Activated CD4-positive, alpha-beta T cell treated with anti-CD3 and anti-CD28 coated beads for 36 hours (primary cell): ENCODE measurements at regions of chr5 and their contacts with region 1.

Region 1: GRCh38 chr5:131252824-131253171 is 11.1 kb upstream of the CDC42SE2 start:
- DNase-seq: peak; percentile 87
- ATAC-seq: peak; percentile 70
- H3K4me3 Mint-ChIP-seq: peak overlapping the region; percentile 84
- H3K27ac Mint-ChIP-seq: peak overlapping the region; percentile 98
- H3K4me1 Mint-ChIP-seq: peaks cover 69% of the 10 kb centered on the region
- H3K27me3 Mint-ChIP-seq: no peaks in the 10 kb centered on the region

Region 2: DNA sequence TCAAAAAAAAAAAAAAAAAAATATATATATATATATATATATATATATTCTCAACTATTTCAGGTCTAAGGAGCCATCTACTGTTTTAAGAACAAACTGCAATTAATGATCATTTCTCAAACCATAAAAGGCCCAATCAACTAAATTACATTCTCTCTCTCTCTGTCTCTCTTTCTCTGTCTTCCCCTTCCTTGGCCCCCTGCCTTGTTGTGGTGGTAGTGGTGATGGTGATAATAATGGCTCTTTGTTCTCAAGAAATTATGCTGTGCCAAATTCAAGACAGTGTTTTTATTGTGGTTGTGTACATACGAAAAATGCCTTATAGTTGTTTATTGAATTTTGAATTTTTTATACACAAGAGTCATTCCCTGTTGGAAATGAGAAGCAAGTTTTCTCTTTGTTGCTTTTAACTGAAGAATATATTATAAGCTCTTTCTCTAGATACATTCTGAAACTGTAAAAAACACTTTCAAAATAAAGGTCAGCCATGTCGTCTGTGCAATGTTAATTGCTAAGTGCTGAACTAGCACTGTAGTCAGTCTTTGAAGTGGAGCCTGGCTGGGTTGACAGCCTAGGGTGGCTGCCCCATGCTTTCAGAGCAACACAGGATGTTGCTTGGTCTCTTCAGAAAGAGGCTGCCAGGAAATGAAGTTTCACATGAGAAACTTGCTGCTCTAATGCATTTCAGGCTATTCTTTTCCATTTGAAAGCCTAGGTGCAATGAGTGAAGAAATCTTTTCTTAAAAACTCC is 183.7 kb before region 1 on chr5:
- CTCF ChIA-PET with region 1: no interaction called
- POLR2A ChIA-PET with region 1: no interaction called
- intact Hi-C with region 1: loop called in 1 of 2 experiments (anchors 5 kb)
- DNase-seq: peak; percentile 81
- ATAC-seq: peak; percentile 99
- H3K4me3 Mint-ChIP-seq: peak overlapping the region; percentile 16
- H3K27ac Mint-ChIP-seq: peak overlapping the region; percentile 95
- H3K4me1 Mint-ChIP-seq: peaks cover 50% of the 10 kb centered on the region
- H3K27me3 Mint-ChIP-seq: no peaks in the 10 kb centered on the region

Region 3: GRCh38 chr5:131170540-131171275 is 82.1 kb before region 1 on chr5 and contains the start of gene LYRM7:
- CTCF ChIA-PET with region 1: interaction called, 3 read pairs
- POLR2A ChIA-PET with region 1: no interaction called
- intact Hi-C with region 1: loop called (anchors 1 to 2 kb)
- DNase-seq: peak; percentile 97
- ATAC-seq: peak; percentile 96
- H3K4me3 Mint-ChIP-seq: peak within 1 kb of the TSS; percentile 95
- H3K27ac Mint-ChIP-seq: peak within 1 kb of the TSS; percentile 93
- H3K4me1 Mint-ChIP-seq: peaks cover 34% of the 10 kb centered on the region
- H3K27me3 Mint-ChIP-seq: no peaks in the 10 kb centered on the region
- total RNA-seq, gene LYRM7: 16.0 to 20.7 TPM

Region 4: DNA sequence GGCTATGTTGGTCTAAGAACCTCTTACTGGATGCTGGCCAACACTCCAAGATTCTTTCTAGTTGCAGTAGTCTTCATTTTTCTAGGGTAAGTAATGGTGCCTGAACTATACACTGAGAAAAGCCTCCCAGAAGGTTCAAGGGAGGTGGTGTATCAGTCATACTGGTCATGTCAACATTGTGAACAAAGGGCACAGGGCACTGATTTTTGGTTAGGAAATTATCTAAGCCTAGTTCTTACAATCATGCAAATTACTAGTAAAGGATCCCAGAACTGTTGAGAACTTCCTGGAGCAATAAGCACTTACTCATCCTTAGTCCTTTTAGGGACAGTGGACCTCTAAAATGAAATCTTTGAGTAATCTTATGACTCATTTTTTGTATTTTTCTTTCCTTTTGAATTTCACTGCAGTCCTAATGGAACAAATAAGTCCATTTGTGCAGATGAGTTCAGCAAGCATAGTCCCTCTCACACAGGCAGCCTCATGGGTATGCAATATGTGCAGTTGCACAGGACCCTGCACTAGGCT is 10.0 kb before region 1 on chr5:
- CTCF ChIA-PET with region 1: interaction called, 5 read pairs
- POLR2A ChIA-PET with region 1: no interaction called
- intact Hi-C with region 1: loop called (anchors 1 kb)
- DNase-seq: peak; percentile 30
- ATAC-seq: peak; percentile 88
- H3K4me3 Mint-ChIP-seq: no peak overlapping the region
- H3K27ac Mint-ChIP-seq: peak overlapping the region; percentile 8
- H3K4me1 Mint-ChIP-seq: peaks cover 8% of the 10 kb centered on the region
- H3K27me3 Mint-ChIP-seq: no peaks in the 10 kb centered on the region

Region 5: GRCh38 chr5:131270809-131271208 is 18.0 kb after region 1 on chr5:
- CTCF ChIA-PET with region 1: interaction called, 25 read pairs
- POLR2A ChIA-PET with region 1: interaction called, 50 read pairs
- intact Hi-C with region 1: loop called in 1 of 2 experiments (anchors 2 kb)
- DNase-seq: no peak
- ATAC-seq: no peak
- H3K4me3 Mint-ChIP-seq: peak overlapping the region; percentile 71
- H3K27ac Mint-ChIP-seq: peak overlapping the region; percentile 97
- H3K4me1 Mint-ChIP-seq: peaks cover 72% of the 10 kb centered on the region
- H3K27me3 Mint-ChIP-seq: no peaks in the 10 kb centered on the region

Region 6: DNA sequence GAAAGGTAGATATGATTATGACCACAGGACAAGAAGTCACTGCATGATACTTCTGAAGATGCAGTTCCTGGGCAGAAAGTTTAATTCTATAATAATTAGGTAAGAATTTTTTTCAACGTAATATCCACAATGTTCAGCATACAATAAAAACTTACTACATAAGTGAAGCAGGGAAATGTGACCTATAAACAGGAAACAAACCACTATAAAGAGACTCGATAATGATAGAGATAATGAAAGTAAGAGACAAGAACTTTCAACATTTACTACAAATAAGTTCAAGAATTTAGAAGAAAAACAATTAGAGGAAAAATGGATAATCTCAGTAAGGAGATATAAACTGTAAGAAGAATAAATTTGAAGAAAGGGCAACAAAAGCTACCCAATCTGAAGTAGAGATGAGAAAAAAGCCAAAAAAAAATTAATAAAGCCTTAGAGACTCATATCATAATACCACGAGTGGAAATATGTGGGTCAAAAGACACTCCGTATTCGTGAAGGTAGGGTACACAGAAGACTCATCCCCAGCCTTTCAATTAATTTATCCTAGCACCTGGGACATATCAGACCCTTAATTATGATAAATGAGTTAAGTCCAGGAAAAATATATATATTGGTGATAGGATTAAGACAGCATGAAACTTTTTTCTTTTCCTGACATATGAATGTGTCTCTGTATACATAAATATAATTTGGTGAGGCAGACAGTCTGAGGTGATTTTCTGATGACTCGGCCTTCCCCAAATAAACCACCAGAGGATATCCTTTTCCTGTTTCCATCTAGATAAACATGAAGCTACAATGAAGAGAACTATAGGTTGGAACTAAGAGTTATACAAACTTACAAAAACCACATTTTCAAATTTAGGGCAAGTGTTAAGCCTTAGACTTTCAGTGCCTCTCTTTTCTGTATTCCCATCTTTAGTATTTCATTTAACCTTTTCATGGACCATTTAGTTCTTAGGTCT is 261.8 kb after region 1 on chr5:
- CTCF ChIA-PET with region 1: no interaction called
- POLR2A ChIA-PET with region 1: no interaction called
- intact Hi-C with region 1: no loop called
- DNase-seq: no peak
- ATAC-seq: peak; percentile 79
- H3K4me3 Mint-ChIP-seq: peak overlapping the region; percentile 61
- H3K27ac Mint-ChIP-seq: peak overlapping the region; percentile 71
- H3K4me1 Mint-ChIP-seq: peaks cover 54% of the 10 kb centered on the region
- H3K27me3 Mint-ChIP-seq: no peaks in the 10 kb centered on the region

Region 7: DNA sequence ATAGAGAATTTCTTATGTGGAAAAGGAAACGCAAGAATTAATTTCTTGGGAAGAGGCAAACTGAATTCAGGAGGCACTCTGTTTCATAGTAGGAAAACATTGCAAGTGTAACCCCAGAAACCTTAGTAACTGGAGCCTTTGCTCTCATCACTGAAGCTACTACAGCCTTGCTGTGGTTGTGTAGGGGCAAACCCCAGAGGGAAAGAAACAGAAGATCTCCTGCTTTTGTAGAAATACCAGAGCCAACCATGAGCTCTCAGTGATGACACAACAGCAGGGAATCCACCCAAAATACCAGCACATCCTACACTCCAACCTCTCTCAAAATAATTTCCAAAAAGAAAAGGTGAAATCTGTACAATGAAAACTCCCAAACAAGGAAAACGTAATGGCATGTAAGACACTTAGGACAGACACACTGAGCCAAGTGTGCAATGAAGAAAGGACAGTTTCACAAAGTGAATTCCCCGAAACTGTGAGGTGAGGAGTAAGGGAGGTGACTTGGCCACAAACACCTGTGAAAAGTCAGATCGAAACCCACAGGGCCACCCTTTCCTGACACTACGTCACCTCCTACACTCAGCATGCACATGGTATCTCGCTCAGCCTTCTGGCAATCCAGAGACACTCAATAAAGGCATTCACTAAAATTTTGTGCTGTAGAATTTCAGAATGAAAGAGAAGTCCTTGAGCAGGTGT is 767.2 kb after region 1 on chr5:
- CTCF ChIA-PET with region 1: no interaction called
- POLR2A ChIA-PET with region 1: no interaction called
- intact Hi-C with region 1: loop called in 1 of 2 experiments (anchors 10 kb)
- DNase-seq: peak; percentile 89
- ATAC-seq: peak; percentile 90
- H3K4me3 Mint-ChIP-seq: peak overlapping the region; percentile 35
- H3K27ac Mint-ChIP-seq: peak overlapping the region; percentile 91
- H3K4me1 Mint-ChIP-seq: peaks cover 41% of the 10 kb centered on the region
- H3K27me3 Mint-ChIP-seq: peaks cover 36% of the 10 kb centered on the region